Naive thymus-derived CD4-positive, alpha-beta T cell (primary cell): ENCODE measurements at regions of chr19 and their contacts with region 1.

Region 1: DNA sequence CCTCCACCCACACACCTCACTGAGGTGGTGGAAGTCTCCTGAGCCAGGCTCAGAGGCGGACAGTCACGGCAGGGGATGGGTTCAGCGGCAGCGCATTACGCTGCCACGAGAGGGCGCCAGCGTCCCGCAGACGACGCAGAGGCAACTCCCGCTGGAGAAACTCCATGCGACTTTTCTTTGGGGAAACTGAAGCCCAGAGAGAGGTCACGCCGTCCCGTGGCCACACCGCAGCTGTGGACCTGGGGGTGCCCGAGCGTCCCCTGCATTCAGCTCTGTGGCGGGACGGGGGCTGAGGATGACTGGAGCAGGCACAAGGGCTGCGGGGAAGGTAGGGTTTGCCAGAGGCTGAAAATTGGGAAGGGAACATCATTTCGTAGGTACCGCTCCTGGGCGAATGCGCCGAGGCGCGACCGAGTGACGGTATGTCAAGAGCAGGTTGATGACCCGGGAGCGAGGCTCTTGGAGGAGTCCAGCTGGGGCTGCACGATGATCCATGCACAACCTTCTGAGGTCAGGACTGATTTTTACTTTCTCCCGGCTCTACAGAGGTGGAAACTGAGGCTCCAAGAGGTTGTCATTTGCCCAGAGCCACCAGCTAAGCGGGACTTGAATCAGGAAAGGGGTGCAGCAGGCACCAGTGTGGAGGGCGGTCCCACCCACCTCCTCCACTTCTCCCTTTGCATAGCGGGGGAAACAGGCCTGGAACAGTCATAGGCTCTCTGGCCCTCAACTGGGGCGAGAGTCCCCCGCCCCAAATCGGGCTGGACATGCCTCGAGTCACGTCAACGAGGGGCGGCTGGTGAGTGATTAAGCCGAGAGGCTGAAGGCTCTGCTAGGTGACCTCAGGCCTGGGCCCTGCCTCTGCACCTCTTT is 690 bp upstream of the ARRDC2 start:
- DNase-seq: peak; percentile 70 to 88 (median 82)
- ATAC-seq: peak; percentile 74
- H3K4me3 ChIP-seq: peak overlapping the region; percentile 53
- H3K4me3 Mint-ChIP-seq: peak overlapping the region; percentile 86 to 98 (median 92)
- H3K27ac ChIP-seq: peak overlapping the region; percentile 91
- H3K27ac Mint-ChIP-seq: peak overlapping the region; percentile 71 to 99 (median 94)
- H3K4me1 ChIP-seq: peaks cover 28 to 36% of the 10 kb centered on the region in 2 donors
- H3K4me1 Mint-ChIP-seq: peaks cover 19 to 45% (median 28%) of the 10 kb centered on the region in 7 donors
- H3K27me3 ChIP-seq: no peaks in the 10 kb centered on the region
- H3K27me3 Mint-ChIP-seq: no peaks in the 10 kb centered on the region

Region 2: GRCh38 chr19:17419621-17420466 is 587.4 kb before region 1 on chr19 and contains the start of gene MVB12A:
- CTCF ChIA-PET with region 1: no interaction called
- POLR2A ChIA-PET with region 1: no interaction called
- intact Hi-C with region 1: loop called in 1 of 2 experiments (anchors 2 kb)
- DNase-seq: peak; percentile 85 to 98 (median 96)
- ATAC-seq: peak; percentile 99
- H3K4me3 ChIP-seq: peak within 1 kb of the TSS; percentile 79
- H3K4me3 Mint-ChIP-seq: peak within 1 kb of the TSS; percentile 87 to 95 (median 91)
- H3K27ac ChIP-seq: peak within 1 kb of the TSS; percentile 70
- H3K27ac Mint-ChIP-seq: peak within 1 kb of the TSS; percentile 73 to 93 (median 89)
- H3K4me1 ChIP-seq: peaks cover 12 to 15% of the 10 kb centered on the region in 2 donors
- H3K4me1 Mint-ChIP-seq: peaks cover 4 to 28% (median 19%) of the 10 kb centered on the region in 7 donors
- H3K27me3 ChIP-seq: no peaks in the 10 kb centered on the region
- H3K27me3 Mint-ChIP-seq: no peaks in the 10 kb centered on the region
- total RNA-seq, gene MVB12A: 19.5 to 45.1 (median 33.3) TPM

Region 3: GRCh38 chr19:18029617-18030338 is 22.5 kb after region 1 on chr19:
- CTCF ChIA-PET with region 1: interaction called, 13 read pairs
- POLR2A ChIA-PET with region 1: interaction called, 961 read pairs
- intact Hi-C with region 1: no loop called
- DNase-seq: no peak
- ATAC-seq: no peak
- H3K4me3 ChIP-seq: no peak overlapping the region
- H3K4me3 Mint-ChIP-seq: no peak overlapping the region
- H3K27ac ChIP-seq: no peak overlapping the region
- H3K27ac Mint-ChIP-seq: peak overlapping the region in 2 of 9 donors; percentile 20 to 60
- H3K4me1 ChIP-seq: peaks cover 0 to 13% of the 10 kb centered on the region in 2 donors
- H3K4me1 Mint-ChIP-seq: peaks cover 12 to 37% (median 27%) of the 10 kb centered on the region in 7 donors
- H3K27me3 ChIP-seq: no peaks in the 10 kb centered on the region
- H3K27me3 Mint-ChIP-seq: no peaks in the 10 kb centered on the region

Region 4: DNA sequence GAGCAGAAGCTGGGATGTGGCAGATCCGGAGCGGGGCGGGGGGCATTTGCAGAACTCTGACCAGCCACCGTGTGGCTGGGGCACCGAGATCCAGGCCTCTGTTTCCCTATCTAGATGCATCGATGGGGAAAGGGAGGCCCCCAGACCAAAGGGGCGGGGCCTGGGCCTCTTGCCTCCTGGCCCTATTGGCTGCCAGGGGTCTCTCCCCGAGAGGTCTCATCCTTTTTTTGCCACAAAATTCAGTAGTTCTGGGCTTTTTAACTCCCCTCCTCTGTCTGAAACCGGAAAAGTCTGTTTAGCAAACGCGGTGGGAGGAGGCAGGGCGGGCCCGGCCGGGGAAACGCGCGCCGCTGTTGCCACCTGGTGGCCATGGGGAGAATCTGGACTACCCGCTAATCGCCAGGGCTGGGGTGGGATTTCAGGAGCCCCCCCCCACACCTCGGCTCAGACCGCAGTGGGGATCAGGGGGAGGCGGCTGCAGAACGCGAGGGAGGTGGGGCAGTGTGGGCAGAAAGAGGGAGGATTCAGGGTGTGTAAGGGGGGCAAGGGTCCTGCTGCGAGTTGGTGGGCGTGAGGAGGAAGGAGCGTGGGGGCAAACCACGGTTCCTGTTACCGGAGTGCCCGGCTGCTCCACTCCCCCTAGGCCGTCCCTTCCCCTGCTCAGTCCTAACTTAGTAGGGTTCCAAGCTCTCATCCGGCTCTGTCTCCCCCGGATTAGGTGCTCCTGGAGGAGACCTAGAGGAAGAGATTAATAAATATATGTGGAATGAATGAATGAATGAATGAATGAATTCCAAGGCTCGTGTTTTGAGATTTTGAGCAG is 51.1 kb after region 1 on chr19:
- CTCF ChIA-PET with region 1: interaction called, 147 read pairs
- POLR2A ChIA-PET with region 1: interaction called, 961 read pairs
- intact Hi-C with region 1: loop called (anchors 1 kb)
- DNase-seq: peak; percentile 76 to 88 (median 82)
- ATAC-seq: peak; percentile 97
- H3K4me3 ChIP-seq: peak overlapping the region; percentile 31
- H3K4me3 Mint-ChIP-seq: peak overlapping the region in 8 of 10 donors; percentile 32 to 62 (median 53)
- H3K27ac ChIP-seq: peak overlapping the region; percentile 62
- H3K27ac Mint-ChIP-seq: peak overlapping the region; percentile 71 to 89 (median 86)
- H3K4me1 ChIP-seq: peaks cover 8 to 13% of the 10 kb centered on the region in 2 donors
- H3K4me1 Mint-ChIP-seq: peaks cover 0 to 18% (median 16%) of the 10 kb centered on the region in 7 donors
- H3K27me3 ChIP-seq: no peaks in the 10 kb centered on the region
- H3K27me3 Mint-ChIP-seq: no peaks in the 10 kb centered on the region

Region 5: DNA sequence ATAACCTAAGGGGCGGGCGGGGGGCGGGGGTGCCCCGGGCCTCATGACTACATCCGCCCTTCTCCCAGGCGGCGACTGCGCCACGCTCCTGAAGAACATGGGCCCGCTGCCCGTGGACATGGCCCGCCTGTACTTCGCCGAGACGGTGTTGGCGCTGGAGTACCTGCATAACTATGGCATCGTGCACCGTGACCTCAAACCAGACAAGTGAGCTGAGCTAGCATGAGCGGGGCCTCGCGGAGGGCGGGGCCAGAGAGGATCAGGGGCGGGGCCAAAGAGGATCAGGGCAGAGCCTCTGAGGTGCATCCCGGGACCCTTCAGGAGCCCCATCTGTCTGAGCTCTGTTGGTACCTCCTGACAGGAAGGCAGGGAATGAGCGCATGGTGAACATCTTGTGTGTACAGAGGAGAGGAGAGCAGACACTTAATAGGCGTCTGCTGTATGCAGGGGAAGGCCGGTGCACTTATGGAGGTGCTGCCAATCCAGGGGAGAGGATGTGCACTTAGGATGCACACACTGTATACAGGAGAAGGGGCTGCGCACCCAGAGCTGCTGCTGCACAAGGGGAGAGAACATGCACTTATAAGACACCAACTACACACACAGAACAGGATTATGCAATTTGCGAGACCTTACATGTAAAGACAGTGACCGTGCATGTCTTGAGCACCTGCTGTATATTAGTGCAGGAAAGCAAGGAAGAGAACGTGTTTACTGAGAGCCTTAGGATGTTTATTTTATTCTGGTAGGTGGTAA is 124.7 kb after region 1 on chr19:
- CTCF ChIA-PET with region 1: no interaction called
- POLR2A ChIA-PET with region 1: no interaction called
- intact Hi-C with region 1: no loop called
- DNase-seq: no peak
- ATAC-seq: no peak
- H3K4me3 ChIP-seq: no peak overlapping the region
- H3K4me3 Mint-ChIP-seq: no peak overlapping the region
- H3K27ac ChIP-seq: no peak overlapping the region
- H3K27ac Mint-ChIP-seq: peak overlapping the region in 1 of 9 donors; percentile 33
- H3K4me1 ChIP-seq: peaks cover 0 to 7% of the 10 kb centered on the region in 2 donors
- H3K4me1 Mint-ChIP-seq: peaks cover 0 to 10% (median 0%) of the 10 kb centered on the region in 7 donors
- H3K27me3 ChIP-seq: no peaks in the 10 kb centered on the region
- H3K27me3 Mint-ChIP-seq: no peaks in the 10 kb centered on the region

Region 6: DNA sequence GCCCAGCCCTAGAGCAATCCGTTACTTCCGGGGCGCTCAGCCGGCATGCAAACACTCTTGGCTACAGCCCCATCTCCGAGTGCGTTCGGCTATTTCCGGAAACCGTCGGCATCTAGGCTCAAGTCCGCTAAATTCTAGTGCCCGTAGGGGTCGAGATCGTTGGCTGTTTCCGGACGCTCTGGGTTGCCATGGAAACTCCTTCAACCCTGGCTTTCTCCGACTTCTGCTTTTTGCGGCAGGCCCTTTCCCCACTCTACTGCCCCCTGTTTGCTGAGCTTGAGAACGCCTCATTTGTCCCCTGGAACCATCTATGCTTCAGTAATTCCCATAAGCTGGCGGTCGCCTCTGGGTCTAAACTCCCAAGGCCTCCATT is 145.2 kb after region 1 on chr19:
- CTCF ChIA-PET with region 1: interaction called, 3 read pairs
- POLR2A ChIA-PET with region 1: interaction called, 4 read pairs
- intact Hi-C with region 1: loop called in 1 of 2 experiments (anchors 1 kb)
- DNase-seq: peak; percentile 92 to 99 (median 97)
- ATAC-seq: peak; percentile 76
- H3K4me3 ChIP-seq: peak overlapping the region; percentile 82
- H3K4me3 Mint-ChIP-seq: peak overlapping the region; percentile 81 to 95 (median 88)
- H3K27ac ChIP-seq: peak overlapping the region; percentile 88
- H3K27ac Mint-ChIP-seq: peak overlapping the region; percentile 89 to 97 (median 95)
- H3K4me1 ChIP-seq: peaks cover 16 to 20% of the 10 kb centered on the region in 2 donors
- H3K4me1 Mint-ChIP-seq: peaks cover 9 to 32% (median 24%) of the 10 kb centered on the region in 7 donors
- H3K27me3 ChIP-seq: no peaks in the 10 kb centered on the region
- H3K27me3 Mint-ChIP-seq: no peaks in the 10 kb centered on the region

Region 7: DNA sequence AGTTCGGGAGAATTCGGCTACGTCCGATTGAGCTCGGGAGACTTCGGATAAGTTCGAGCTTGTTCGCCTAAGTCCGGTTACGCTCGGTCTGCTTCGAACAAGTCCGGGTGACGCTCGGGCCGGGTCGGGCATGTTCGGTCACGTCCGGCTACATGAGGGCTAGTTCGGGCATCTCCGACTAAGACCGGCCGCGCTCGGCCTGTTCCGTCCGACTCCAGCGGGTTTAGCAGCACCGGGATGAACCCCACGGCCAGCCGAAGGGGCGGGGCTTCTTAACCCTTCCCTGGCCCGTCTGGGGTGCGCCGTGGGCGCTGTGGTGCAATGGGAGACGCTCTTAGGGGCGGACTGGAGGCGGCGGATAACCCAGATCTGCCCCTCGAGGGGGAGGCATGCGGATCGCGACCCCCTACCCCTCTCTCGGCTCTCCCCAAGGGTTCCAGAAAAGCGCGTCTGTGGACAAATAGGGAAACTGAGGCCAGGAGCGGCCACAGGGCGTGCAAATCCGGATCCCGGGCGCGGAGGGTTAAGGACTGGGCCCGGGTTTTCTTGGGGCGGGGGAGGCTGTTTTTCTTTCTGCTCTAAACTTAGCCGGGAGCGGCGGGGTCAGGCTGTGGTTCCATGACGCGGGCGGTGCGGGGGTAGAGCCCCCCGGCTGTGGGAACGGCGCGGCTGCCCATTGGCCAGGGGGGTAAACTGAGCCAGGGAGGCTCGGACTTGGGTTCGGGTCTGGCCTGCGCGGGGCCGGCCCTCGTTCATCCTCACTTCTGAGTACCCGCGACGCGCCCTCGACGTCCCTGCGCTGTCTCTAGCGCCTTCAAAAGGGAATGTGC is 217.5 kb after region 1 on chr19:
- CTCF ChIA-PET with region 1: no interaction called
- POLR2A ChIA-PET with region 1: no interaction called
- intact Hi-C with region 1: no loop called
- DNase-seq: peak; percentile 65 to 87 (median 80)
- ATAC-seq: peak; percentile 98
- H3K4me3 ChIP-seq: peak overlapping the region; percentile 46
- H3K4me3 Mint-ChIP-seq: peak overlapping the region; percentile 80 to 90 (median 87)
- H3K27ac ChIP-seq: no peak overlapping the region
- H3K27ac Mint-ChIP-seq: peak overlapping the region in 2 of 9 donors; percentile 41 to 68
- H3K4me1 ChIP-seq: peaks cover 6 to 16% of the 10 kb centered on the region in 2 donors
- H3K4me1 Mint-ChIP-seq: peaks cover 11 to 25% (median 20%) of the 10 kb centered on the region in 7 donors
- H3K27me3 ChIP-seq: peaks cover 12 to 28% of the 10 kb centered on the region in 2 donors
- H3K27me3 Mint-ChIP-seq: peaks cover 43 to 66% (median 56%) of the 10 kb centered on the region in 5 donors

Region 8: DNA sequence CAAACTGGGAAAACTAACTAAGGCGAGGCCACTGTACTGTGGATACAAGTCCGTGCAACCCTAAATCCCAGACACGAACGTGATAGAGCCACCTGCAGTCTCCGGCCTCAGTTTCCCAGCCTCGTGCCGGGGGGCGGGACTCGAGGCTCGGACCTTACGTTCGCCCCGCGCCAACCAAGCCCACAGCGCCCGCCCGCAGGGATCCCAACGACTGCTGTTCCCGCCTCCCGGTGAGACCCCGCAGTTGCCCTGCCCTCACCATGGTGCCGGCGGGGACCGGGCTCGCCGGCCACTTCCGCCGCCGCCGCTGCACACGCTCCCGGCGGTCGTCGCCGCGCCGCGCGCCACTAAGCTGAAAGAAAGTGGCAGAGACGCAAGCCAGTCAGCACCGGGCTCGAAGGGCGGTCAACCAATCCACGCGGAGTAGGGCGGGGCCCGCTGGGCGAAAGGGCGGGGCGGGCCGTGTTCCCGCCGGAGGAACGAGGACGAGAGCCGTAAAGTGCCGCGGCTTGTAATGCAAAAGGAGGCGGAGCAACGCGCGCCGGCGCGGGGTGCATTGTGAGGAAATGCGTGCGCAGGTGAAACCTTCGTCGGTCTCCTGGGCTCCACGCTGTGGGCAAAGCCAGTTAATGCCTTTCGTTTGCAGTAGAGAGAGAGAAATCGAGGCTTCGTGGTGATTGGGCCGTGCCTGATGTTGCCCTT is 315.6 kb after region 1 on chr19 and contains the start of gene LSM4:
- CTCF ChIA-PET with region 1: no interaction called
- POLR2A ChIA-PET with region 1: interaction called, 5 read pairs
- intact Hi-C with region 1: loop called in 1 of 2 experiments (anchors 5 kb)
- DNase-seq: peak; percentile 95 to 100 (median 99)
- ATAC-seq: peak; percentile 98
- H3K4me3 ChIP-seq: peak within 1 kb of the TSS; percentile 86
- H3K4me3 Mint-ChIP-seq: peak within 1 kb of the TSS; percentile 80 to 88 (median 84)
- H3K27ac ChIP-seq: peak within 1 kb of the TSS; percentile 94
- H3K27ac Mint-ChIP-seq: peak within 1 kb of the TSS; percentile 89 to 99 (median 95)
- H3K4me1 ChIP-seq: peaks cover 47 to 55% of the 10 kb centered on the region in 2 donors
- H3K4me1 Mint-ChIP-seq: peaks cover 42 to 58% (median 51%) of the 10 kb centered on the region in 7 donors
- H3K27me3 ChIP-seq: no peaks in the 10 kb centered on the region
- H3K27me3 Mint-ChIP-seq: no peaks in the 10 kb centered on the region
- total RNA-seq, gene LSM4: 45.3 to 131 (median 56.2) TPM

Region 9: DNA sequence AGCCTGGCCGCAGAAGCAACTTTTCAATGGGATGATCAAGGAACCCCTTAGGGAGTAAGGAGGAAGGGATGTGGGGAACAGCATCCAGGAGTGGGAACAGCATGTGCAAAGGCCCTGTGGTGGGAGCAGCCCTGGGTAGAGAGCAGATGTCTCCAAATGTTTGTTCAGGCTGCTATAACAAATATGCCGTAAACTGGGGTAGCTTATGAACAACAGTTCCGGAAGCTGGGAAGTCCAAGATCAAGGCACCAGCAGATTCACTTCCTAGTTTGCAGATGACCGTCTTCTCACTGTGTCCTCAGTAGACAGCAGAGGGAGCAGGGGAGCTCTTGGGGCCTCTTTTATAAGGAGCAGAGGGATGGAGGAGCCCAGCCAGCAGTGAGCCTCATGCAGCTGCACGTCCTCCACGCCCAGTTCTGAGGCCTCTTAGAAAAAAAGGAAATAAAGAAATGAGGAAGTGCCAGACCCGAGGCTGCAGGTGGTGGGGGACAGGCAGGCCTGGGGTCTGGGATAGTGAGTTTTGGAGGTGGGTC is 394.4 kb after region 1 on chr19:
- CTCF ChIA-PET with region 1: no interaction called
- POLR2A ChIA-PET with region 1: no interaction called
- intact Hi-C with region 1: no loop called
- DNase-seq: no peak
- ATAC-seq: peak; percentile 89
- H3K4me3 ChIP-seq: no peak overlapping the region
- H3K4me3 Mint-ChIP-seq: no peak overlapping the region
- H3K27ac ChIP-seq: no peak overlapping the region
- H3K27ac Mint-ChIP-seq: peak overlapping the region in 1 of 9 donors; percentile 2
- H3K4me1 ChIP-seq: peaks cover 0 to 8% of the 10 kb centered on the region in 2 donors
- H3K4me1 Mint-ChIP-seq: peaks cover 0 to 15% (median 5%) of the 10 kb centered on the region in 7 donors
- H3K27me3 ChIP-seq: peaks cover 0 to 5% of the 10 kb centered on the region in 2 donors
- H3K27me3 Mint-ChIP-seq: peaks cover 0 to 16% (median 6%) of the 10 kb centered on the region in 5 donors